IMR-90 (cell line): ENCODE measurements at regions of chr9 and their contacts with region 1.

Region 1: GRCh38 chr9:98998441-98999151 is 54.9 kb downstream of the COL15A1 start:
- DNase-seq: peak; percentile 56
- ATAC-seq: peak; percentile 86
- H3K4me3 ChIP-seq: no peak overlapping the region
- H3K27ac ChIP-seq: peak overlapping the region; percentile 31; the same call in 1 of the 2 replicates
- H3K4me1 ChIP-seq: peaks cover 17% of the 10 kb centered on the region
- H3K27me3 ChIP-seq: no peaks in the 10 kb centered on the region
- CTCF ChIP-seq: peak; percentile 78
- POLR2A ChIP-seq: no peak
- RAD21 ChIP-seq: peak; percentile 89

Region 2: DNA sequence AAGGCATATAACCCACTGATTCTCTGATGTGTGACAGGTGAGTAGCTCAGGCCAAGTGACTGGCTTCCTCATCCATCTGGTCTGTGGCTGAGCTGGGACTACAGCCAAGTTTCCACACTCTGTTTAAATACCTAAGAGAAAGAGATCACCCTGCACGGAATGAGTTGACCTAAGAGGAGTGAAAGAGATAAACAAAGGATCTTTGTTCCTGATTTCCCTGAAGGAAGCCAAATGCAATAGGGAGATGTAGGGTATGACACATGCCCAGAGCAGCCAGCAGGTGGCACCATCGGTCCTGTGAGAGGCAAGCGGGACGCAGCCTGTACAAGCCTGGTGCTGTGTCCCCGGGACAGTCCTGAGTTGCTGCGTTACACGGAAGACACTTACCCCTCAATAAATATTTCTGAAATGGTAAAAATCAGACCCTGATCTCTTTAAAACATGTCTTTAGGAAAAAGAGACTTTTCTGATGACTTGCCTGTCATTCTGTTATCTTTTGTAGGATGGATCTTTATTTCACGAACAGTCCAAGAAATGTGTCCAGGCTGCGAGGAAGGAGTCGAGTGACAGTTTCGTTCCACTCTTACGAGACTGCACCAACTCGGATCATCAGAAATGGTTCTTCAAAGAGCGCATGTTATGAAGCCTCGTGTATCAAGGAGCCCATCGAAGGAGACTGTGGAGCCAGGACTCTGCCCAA is 150.0 kb before region 1 on chr9:
- CTCF ChIA-PET with region 1: interaction called, 6 read pairs
- POLR2A ChIA-PET with region 1: no interaction called
- dilution Hi-C with region 1: no loop called
- in situ Hi-C with region 1: no loop called
- intact Hi-C with region 1: loop called (anchors 1 kb)
- DNase-seq: peak; percentile 98
- ATAC-seq: peak; percentile 99
- H3K4me3 ChIP-seq: peak overlapping the region; percentile 2; the same call in 1 of the 2 replicates
- H3K27ac ChIP-seq: peak overlapping the region; percentile 15; the same call in 1 of the 2 replicates
- H3K4me1 ChIP-seq: peaks cover 9% of the 10 kb centered on the region
- H3K27me3 ChIP-seq: peaks cover 6% of the 10 kb centered on the region; the same call in 1 of the 2 replicates
- CTCF ChIP-seq: peak; percentile 93
- POLR2A ChIP-seq: no peak
- RAD21 ChIP-seq: peak; percentile 94

Region 3: GRCh38 chr9:98890256-98890655 is 108.3 kb before region 1 on chr9:
- CTCF ChIA-PET with region 1: no interaction called
- POLR2A ChIA-PET with region 1: no interaction called
- dilution Hi-C with region 1: no loop called
- in situ Hi-C with region 1: no loop called
- intact Hi-C with region 1: no loop called
- DNase-seq: no peak
- ATAC-seq: no peak
- H3K4me3 ChIP-seq: no peak overlapping the region
- H3K27ac ChIP-seq: no peak overlapping the region
- H3K4me1 ChIP-seq: peaks cover 17% of the 10 kb centered on the region
- H3K27me3 ChIP-seq: no peaks in the 10 kb centered on the region
- CTCF ChIP-seq: no peak
- POLR2A ChIP-seq: no peak
- RAD21 ChIP-seq: no peak

Region 4: DNA sequence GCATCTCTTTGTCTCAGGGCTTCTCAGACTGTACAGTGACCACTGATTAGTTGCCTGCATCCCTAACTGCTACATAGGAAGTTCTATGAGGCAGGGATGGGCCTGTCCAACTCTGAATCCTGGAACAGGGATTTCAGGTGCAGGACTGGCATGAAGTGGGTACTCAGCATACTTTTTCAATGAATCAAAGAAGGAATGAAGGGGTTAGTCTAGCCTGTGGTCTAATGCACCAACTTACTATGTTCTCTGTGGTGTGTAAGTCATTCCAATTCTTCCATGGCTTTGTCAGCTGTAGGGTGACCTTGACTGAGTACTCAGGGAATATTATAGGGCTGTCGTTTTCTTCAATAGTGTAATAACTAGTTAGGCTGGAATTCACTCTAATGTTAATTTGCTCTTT is 46.6 kb before region 1 on chr9:
- CTCF ChIA-PET with region 1: no interaction called
- POLR2A ChIA-PET with region 1: no interaction called
- dilution Hi-C with region 1: no loop called
- in situ Hi-C with region 1: no loop called
- intact Hi-C with region 1: no loop called
- DNase-seq: no peak
- ATAC-seq: no peak
- H3K4me3 ChIP-seq: no peak overlapping the region
- H3K27ac ChIP-seq: no peak overlapping the region
- H3K4me1 ChIP-seq: no peaks in the 10 kb centered on the region; the same call in 1 of the 2 replicates
- H3K27me3 ChIP-seq: no peaks in the 10 kb centered on the region
- CTCF ChIP-seq: no peak
- POLR2A ChIP-seq: no peak
- RAD21 ChIP-seq: no peak

Region 5: GRCh38 chr9:98974994-98975712 is 23.4 kb before region 1 on chr9:
- CTCF ChIA-PET with region 1: interaction called, 3 read pairs
- POLR2A ChIA-PET with region 1: no interaction called
- dilution Hi-C with region 1: no loop called
- in situ Hi-C with region 1: no loop called
- intact Hi-C with region 1: loop called (anchors 2 kb)
- DNase-seq: peak; percentile 66
- ATAC-seq: peak; percentile 86
- H3K4me3 ChIP-seq: no peak overlapping the region
- H3K27ac ChIP-seq: no peak overlapping the region
- H3K4me1 ChIP-seq: peaks cover 26% of the 10 kb centered on the region
- H3K27me3 ChIP-seq: no peaks in the 10 kb centered on the region
- CTCF ChIP-seq: peak; percentile 98
- POLR2A ChIP-seq: 0 out of 2 replicates have a peak, but pooled peaks have one; percentile 45
- RAD21 ChIP-seq: peak; percentile 93

Region 6: DNA sequence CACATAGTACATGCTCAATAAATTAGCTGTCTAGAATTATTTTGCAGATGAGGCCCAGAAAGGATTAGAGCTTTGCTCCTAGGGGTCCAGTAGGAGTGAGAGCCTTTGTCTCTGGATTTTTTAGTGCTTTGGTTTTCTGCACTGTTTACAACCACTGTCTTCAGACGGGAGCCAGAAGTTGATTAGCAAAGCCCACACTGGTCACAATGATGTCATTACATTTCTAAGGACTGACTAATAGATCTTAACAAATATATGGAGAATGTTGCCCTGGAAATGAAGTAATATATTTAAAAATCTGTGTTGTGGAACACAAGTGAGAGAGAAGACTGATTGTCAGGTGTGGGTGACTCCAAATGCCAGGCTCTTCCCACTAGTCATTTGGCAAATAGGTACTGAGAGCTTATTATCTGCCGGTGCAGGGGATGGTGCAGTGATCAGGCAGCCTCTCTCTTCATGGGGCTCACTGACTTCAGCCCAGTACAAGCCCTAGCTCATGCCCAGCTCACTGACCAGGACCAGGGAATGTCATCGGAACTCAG is 21.3 kb after region 1 on chr9:
- CTCF ChIA-PET with region 1: no interaction called
- POLR2A ChIA-PET with region 1: no interaction called
- dilution Hi-C with region 1: no loop called
- in situ Hi-C with region 1: no loop called
- intact Hi-C with region 1: no loop called
- DNase-seq: peak; percentile 99
- ATAC-seq: peak; percentile 90
- H3K4me3 ChIP-seq: no peak overlapping the region
- H3K27ac ChIP-seq: peak overlapping the region; percentile 98
- H3K4me1 ChIP-seq: peaks cover 34% of the 10 kb centered on the region
- H3K27me3 ChIP-seq: no peaks in the 10 kb centered on the region
- CTCF ChIP-seq: no peak
- POLR2A ChIP-seq: no peak
- RAD21 ChIP-seq: no peak

Region 7: DNA sequence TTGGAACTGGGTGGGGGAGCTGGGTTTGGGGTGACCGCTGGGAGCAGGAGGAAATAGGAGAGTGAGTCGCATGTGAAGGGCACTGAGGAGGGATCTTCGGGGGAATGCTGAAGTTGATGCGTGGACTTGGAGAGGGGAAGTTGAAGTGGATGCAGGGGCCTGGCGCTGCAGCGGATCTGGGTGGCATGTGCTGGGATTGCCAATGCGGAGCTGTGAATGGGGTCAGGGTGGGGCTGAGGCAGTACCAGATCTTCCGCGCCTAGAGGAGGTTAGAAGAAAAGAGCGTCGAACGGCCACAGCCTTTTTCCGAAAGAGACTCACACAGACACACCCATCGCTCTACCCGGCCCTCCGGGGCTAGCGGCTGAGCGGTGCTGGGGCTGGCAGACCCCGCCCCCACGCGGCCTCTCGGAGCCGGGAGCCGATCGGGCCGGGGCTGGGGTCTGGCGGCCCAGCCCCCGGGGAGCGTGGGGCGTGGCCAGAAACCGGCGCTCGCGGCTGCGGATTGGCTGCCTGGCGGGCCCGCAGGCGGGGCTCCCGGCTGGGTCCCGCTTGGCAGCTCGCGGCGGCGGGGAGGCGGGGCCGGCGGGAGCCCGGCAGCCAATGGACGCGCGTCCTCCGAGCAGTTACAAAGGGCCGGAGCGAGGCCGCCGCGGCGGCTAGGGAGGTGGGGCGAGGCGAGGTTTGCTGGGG is 106.0 kb after region 1 on chr9 and contains the start of gene TGFBR1:
- CTCF ChIA-PET with region 1: interaction called, 3 read pairs
- POLR2A ChIA-PET with region 1: no interaction called
- dilution Hi-C with region 1: no loop called
- in situ Hi-C with region 1: no loop called
- intact Hi-C with region 1: loop called (anchors 2 kb)
- DNase-seq: peak; percentile 89
- ATAC-seq: peak; percentile 89
- H3K4me3 ChIP-seq: peak within 1 kb of the TSS; percentile 67
- H3K27ac ChIP-seq: peak within 1 kb of the TSS; percentile 95
- H3K4me1 ChIP-seq: peaks cover 14% of the 10 kb centered on the region
- H3K27me3 ChIP-seq: no peaks in the 10 kb centered on the region
- CTCF ChIP-seq: no peak
- POLR2A ChIP-seq: peak; percentile 93
- RAD21 ChIP-seq: no peak; the same call in 1 of the 2 replicates
- total RNA-seq, gene TGFBR1: 57.8 and 75.3 TPM in 2 replicates

Region 8: GRCh38 chr9:99140685-99141314 is 142.2 kb after region 1 on chr9:
- CTCF ChIA-PET with region 1: interaction called, 17 read pairs
- POLR2A ChIA-PET with region 1: no interaction called
- dilution Hi-C with region 1: no loop called
- in situ Hi-C with region 1: no loop called
- intact Hi-C with region 1: loop called (anchors 1 kb)
- DNase-seq: peak; percentile 67
- ATAC-seq: peak; percentile 90
- H3K4me3 ChIP-seq: no peak overlapping the region
- H3K27ac ChIP-seq: no peak overlapping the region
- H3K4me1 ChIP-seq: no peaks in the 10 kb centered on the region
- H3K27me3 ChIP-seq: no peaks in the 10 kb centered on the region
- CTCF ChIP-seq: peak; percentile 86
- POLR2A ChIP-seq: no peak
- RAD21 ChIP-seq: peak; percentile 95

Region 9: GRCh38 chr9:99221621-99222415 is 223.2 kb after region 1 on chr9 and contains the starts of genes ALG2 and SEC61B:
- CTCF ChIA-PET with region 1: no interaction called
- POLR2A ChIA-PET with region 1: no interaction called
- dilution Hi-C with region 1: no loop called
- in situ Hi-C with region 1: no loop called
- intact Hi-C with region 1: loop called (anchors 2 kb)
- DNase-seq: peak; percentile 96
- ATAC-seq: peak; percentile 95
- H3K4me3 ChIP-seq: peak within 1 kb of the TSS; percentile 92
- H3K27ac ChIP-seq: peak within 1 kb of the TSS; percentile 98
- H3K4me1 ChIP-seq: no peaks in the 10 kb centered on the region; the same call in none of the 2 replicates
- H3K27me3 ChIP-seq: no peaks in the 10 kb centered on the region
- CTCF ChIP-seq: no peak
- POLR2A ChIP-seq: peak; percentile 96
- RAD21 ChIP-seq: no peak
- total RNA-seq, gene ALG2: 33.9 and 38.4 TPM in 2 replicates
- total RNA-seq, gene SEC61B: 180 and 184 TPM in 2 replicates